ENCODE measurements at regions of chr12 and their contacts with region 1.

Region 1: GRCh38 chr12:47651368-47652254 is 54.2 kb downstream of the RPAP3 start:
- DNase-seq: peak; percentile 47 to 64 (median 51)
- ATAC-seq: peak; percentile 70 to 91 (median 87)
- H3K4me3 ChIP-seq: peak overlapping the region in 5 of 12 donors; percentile 8 to 45 (median 13)
- H3K27ac ChIP-seq: peak overlapping the region in 2 of 12 donors; percentile 27 to 33
- H3K4me1 ChIP-seq: peaks cover 0 to 24% (median 12%) of the 10 kb centered on the region in 12 donors
- H3K27me3 ChIP-seq: no peaks in the 10 kb centered on the region
- CTCF ChIP-seq: peak; percentile 64 to 88 (median 74)
- POLR2A ChIP-seq: no peak

Region 2: GRCh38 chr12:47686645-47687240 is 35.1 kb after region 1 on chr12:
- intact Hi-C with region 1: loop called in 3 of 10 experiments (anchors 1 to 5 kb)
- DNase-seq: no peak
- ATAC-seq: peak in 2 of 4 donors; percentile 50 to 64
- H3K4me3 ChIP-seq: no peak overlapping the region
- H3K27ac ChIP-seq: no peak overlapping the region
- H3K4me1 ChIP-seq: no peaks in the 10 kb centered on the region
- H3K27me3 ChIP-seq: no peaks in the 10 kb centered on the region
- CTCF ChIP-seq: peak; percentile 28 to 73 (median 58)
- POLR2A ChIP-seq: no peak

Region 3: DNA sequence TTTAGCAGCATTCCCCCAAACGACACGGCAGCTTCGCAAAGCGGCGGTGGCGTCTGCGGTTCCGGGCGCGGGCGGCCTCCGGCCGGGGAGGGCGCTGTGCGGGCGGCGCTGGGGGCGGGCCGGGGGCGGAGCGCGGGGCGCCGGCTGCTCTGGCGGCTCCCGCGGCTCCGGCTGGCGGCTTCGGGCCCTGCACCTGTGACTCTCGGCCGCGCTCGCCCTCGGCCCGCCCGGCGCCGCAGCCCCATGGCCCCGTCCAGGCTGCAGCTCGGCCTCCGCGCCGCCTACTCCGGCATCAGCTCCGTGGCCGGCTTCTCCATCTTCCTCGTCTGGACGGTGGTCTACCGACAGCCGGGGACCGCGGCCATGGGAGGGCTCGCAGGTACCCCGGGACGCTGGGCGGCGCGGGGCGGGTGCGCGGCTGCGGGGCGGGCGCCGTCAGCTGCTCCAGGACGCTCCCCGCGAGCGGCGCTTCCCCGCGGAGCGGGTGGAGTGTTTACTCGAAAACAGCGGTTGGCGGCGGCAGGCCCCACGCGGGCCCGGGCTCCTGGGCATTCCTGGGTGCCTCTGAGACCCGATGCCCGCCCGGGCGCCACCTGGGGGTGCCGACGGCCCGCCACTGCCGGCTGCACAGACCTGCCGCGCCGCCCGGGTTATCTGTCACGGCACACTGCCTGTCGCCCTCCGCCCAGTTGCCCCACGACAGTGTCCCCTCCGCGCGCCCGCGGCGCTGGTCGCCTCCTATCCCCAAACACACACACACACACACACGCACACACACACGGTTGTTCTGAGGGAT is 121.6 kb after region 1 on chr12 and contains the start of gene SLC48A1:
- intact Hi-C with region 1: loop called in 2 of 10 experiments (anchors 5 kb)
- DNase-seq: peak; percentile 76 to 91 (median 82)
- ATAC-seq: peak; percentile 27 to 87 (median 75)
- H3K4me3 ChIP-seq: peak within 1 kb of the TSS; percentile 74 to 99 (median 96)
- H3K27ac ChIP-seq: peak within 1 kb of the TSS; percentile 23 to 88 (median 82)
- H3K4me1 ChIP-seq: peaks cover 3 to 64% (median 51%) of the 10 kb centered on the region in 12 donors
- H3K27me3 ChIP-seq: no peaks in the 10 kb centered on the region
- CTCF ChIP-seq: peak; percentile 5 to 62 (median 37)
- POLR2A ChIP-seq: peak in 1 of 2 donors; percentile 54
- total RNA-seq, gene SLC48A1: 17.6 to 68.2 (median 23.9) TPM

Region 4: DNA sequence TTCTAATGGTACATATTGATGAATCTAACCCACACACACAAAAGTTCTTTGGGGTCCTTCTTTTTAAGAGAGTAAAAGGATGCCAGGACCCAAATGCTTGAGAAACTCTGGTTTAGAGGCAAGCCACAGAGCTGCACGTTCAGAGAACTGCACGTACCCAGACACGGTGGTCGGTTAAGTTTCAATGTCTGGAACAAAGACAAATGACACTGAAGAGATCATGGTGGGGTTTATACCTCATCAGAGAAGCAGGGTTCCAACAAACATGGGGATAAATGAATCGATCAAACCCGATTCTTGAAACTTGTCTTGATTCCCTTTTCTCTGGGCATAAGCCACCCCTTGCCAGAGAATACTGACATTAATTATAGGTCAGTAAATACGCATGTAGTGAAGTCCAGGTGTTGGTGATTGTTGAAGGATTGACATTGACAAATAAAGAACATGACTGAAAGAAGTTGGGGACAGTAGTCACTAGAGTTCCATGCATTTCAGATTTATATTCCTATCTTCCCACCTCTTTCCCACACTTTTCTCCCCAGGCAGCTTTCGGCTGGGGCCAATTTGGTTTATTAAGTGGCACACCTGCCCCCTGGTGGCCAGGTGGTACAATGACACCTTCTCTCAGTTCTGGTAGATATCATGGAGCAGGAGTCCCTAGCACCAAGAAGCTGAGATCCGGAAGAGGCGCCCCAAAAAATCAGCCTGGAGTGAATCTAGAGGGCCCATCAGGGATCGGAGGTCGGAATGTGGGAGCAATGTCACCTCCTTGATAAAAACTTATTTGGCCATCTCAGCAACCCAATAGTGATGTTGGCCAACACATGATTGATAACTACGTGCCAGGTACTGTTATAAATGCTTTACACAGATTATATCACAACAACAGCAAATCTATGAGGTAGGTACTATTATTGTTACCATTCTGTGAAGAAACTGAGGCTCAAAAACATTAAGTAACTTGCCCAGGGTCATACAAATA is 185.9 kb after region 1 on chr12:
- intact Hi-C with region 1: loop called in 2 of 10 experiments (anchors 2 to 5 kb)
- DNase-seq: peak; percentile 69 to 81 (median 72)
- ATAC-seq: peak; percentile 52 to 78 (median 70)
- H3K4me3 ChIP-seq: no peak overlapping the region
- H3K27ac ChIP-seq: peak overlapping the region in 1 of 12 donors; percentile 36
- H3K4me1 ChIP-seq: peaks cover 0 to 33% (median 11%) of the 10 kb centered on the region in 12 donors
- H3K27me3 ChIP-seq: no peaks in the 10 kb centered on the region
- CTCF ChIP-seq: peak; percentile 89 to 99 (median 92)
- POLR2A ChIP-seq: no peak